ENCODE measurements at regions of chr6 and their contacts with region 1.

Region 1: DNA sequence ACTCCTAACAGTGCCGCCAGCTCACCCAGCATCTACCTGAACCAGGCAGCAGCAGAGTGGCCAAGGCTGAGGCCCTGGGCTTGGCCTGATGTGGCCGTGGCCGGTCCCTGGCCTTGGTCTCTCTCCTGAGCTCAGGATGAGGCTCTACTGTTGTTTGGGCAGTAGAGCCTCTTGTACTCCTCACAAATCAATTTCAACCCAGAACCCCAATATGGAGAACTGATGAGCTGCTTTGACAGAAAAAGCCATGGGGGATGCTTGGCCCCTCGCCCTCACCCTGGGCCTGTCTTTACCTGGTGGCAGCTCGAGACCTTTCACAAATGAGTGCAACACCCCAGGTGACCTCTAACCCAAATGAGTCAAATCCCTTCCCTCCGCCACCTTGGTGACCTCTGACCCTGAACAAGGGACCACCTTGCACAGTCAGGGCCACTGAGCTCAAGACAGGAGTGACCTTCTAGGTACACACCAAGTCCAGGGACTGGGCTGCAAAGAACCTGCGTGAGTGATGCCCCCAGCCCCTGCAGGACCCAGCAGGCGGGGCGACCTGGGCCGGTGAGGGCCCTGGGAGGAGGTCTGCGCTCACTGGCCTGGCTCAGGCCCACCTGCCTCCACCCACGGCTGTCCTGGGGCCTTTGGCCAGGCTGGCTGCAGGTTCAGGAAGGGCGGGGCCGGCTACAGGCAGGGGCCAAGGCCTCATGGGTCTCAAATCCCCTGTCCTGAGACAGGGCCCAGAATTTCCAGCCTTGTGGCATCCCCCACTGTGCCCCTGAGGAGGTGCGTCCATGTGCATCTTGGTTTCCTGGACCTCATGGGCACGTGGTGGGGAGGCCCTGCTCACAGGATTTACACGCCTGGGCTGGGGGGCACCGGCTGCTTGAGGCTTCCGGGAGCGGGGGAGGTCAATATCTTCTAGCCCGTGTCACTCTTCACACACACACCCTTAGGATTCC is 30.2 kb downstream of the PSMG4 start:
- DNase-seq: no peak
- H3K4me3 ChIP-seq: no peak overlapping the region
- H3K27ac ChIP-seq: no peak overlapping the region
- H3K4me1 ChIP-seq: no peaks in the 10 kb centered on the region
- H3K27me3 ChIP-seq: no peaks in the 10 kb centered on the region
- CTCF ChIP-seq: no peak

Region 2: DNA sequence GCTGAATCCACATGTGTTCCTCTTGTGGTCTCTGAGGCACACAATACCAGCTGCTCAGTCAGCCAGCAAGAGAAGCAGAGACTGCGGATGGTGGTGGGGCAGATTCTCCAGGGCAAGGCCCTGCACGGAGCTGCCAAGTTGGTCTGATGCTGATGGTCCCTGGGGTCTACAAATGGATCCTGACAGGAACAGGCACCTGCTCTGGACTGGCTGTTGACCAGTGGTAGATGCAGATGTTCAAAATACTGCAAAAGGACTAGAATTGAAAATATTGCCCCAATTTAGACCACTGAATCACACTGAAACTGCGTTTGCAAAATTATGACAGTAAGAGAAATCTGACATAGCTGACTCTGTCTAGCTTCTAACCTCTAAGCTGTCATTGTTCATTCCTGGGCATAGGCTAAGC is 102.0 kb before region 1 on chr6:
- CTCF ChIA-PET with region 1: no interaction called
- POLR2A ChIA-PET with region 1: no interaction called
- intact Hi-C with region 1: no loop called
- DNase-seq: no peak
- H3K4me3 ChIP-seq: no peak overlapping the region
- H3K27ac ChIP-seq: no peak overlapping the region
- H3K4me1 ChIP-seq: peaks cover 8% of the 10 kb centered on the region; the same call in 1 of the 2 replicates
- H3K27me3 ChIP-seq: no peaks in the 10 kb centered on the region
- CTCF ChIP-seq: no peak

Region 3: GRCh38 chr6:3269281-3269975 is 19.6 kb before region 1 on chr6:
- CTCF ChIA-PET with region 1: no interaction called
- POLR2A ChIA-PET with region 1: no interaction called
- intact Hi-C with region 1: no loop called
- DNase-seq: no peak
- H3K4me3 ChIP-seq: no peak overlapping the region
- H3K27ac ChIP-seq: no peak overlapping the region
- H3K4me1 ChIP-seq: no peaks in the 10 kb centered on the region
- H3K27me3 ChIP-seq: no peaks in the 10 kb centered on the region
- CTCF ChIP-seq: no peak

Region 4: DNA sequence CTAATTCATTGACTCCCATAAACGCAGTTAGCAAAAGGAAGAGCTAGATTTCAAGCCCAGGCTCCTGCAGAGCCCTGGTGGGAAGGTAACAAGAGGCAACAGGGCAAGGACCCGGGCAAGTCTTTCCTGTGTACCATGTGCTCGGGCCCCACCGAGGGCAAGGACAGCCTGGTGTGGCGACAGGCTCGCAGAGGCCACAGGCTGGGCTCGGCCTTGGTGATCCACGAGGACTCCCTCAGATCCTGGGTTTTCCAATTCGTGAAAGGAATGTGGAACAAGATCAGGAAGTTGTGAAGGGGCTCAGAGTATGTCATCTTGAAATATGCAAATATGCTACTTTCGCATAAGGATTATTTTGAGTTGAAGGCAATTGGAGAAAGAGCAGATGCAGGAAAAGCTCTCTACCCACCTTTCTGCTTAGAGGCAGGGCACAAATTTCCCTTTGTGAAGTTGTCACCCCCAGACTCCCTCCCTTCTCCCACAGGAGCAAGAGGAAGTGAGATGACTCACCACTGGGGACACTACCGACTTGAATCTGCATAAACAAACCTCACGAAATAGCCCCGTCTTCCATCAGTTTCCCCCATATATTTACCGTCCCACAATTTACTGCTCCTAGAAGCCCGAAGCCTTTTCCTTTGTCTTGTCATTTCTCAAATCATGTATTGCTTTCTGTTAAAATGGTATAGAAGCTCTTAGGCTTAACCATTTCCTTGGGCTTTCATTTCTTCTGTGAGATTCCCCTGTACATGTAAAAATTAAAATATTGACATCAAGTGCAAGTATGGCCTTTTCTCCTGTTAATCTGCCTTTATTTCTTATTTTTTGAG is 48.7 kb after region 1 on chr6:
- CTCF ChIA-PET with region 1: no interaction called
- POLR2A ChIA-PET with region 1: interaction called, 11 read pairs
- intact Hi-C with region 1: no loop called
- DNase-seq: peak in 1 of 2 experiments; percentile 18
- H3K4me3 ChIP-seq: no peak overlapping the region
- H3K27ac ChIP-seq: no peak overlapping the region
- H3K4me1 ChIP-seq: peaks cover 8% of the 10 kb centered on the region
- H3K27me3 ChIP-seq: no peaks in the 10 kb centered on the region
- CTCF ChIP-seq: no peak

Measured in PC-9 (cell line).